Dorsolateral prefrontal cortex (tissue), 120 donors: ENCODE measurements at regions of chr9 and their contacts with region 1.

Region 1: DNA sequence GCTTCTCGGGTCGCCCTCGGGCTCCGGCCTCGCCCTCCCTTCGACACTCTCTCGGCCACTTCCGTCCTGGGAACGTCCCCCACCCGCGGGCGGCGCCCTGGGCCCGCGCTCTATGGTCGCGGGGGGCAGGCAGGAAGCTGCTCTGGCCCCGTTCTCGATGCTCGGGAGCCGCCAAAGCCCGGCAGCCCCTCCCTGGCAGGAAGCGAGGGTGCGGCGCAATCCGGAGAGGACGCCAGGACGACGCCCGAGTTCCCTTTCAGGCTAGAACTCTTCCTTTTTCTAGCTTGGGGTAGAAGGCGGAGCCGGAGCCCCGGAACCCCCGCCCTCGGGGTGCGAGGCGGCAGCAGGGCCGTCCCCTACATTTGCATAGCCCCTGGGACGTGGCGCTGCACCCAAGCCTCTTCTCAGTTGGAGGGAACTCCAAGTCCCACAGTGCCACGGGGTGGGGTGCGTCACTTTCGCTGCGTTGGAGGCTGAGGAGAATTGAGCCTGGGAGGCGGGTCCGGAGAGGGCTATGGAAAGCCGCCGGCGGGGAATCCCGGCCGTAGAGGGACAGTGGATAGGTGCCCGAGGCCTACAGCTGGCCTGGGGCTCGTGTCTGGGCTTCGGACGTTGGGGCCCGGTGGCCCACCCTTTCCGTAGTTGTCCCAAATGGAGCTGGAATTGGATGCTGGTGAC is at the starts of genes CREB3 and TLN1:
- DNase-seq: peak; percentile 94 to 99 (median 97)
- H3K4me3 ChIP-seq: peak within 1 kb of the TSS; percentile 60 to 100 (median 88)
- H3K27ac ChIP-seq: peak within 1 kb of the TSS; percentile 33 to 98 (median 92)
- H3K27me3 ChIP-seq: no peaks in the 10 kb centered on the region
- CTCF ChIP-seq: peak in 50 of 56 donors; percentile 0 to 72 (median 45)
- total RNA-seq, gene CREB3: 30.1 to 53.9 (median 40.9) TPM
- total RNA-seq, gene TLN1: 65.1 to 206 (median 112) TPM

Region 2: GRCh38 chr9:35111001-35111933 is 621.0 kb before region 1 on chr9:
- intact Hi-C with region 1: loop called in 1 of 2 experiments (anchors 5 kb)
- DNase-seq: peak; percentile 97 to 99 (median 99)
- H3K4me3 ChIP-seq: peak overlapping the region; percentile 60 to 99 (median 94)
- H3K27ac ChIP-seq: peak overlapping the region; percentile 72 to 98 (median 92)
- H3K27me3 ChIP-seq: no peaks in the 10 kb centered on the region
- CTCF ChIP-seq: peak in 22 of 56 donors; percentile 11 to 51 (median 26)

Region 3: GRCh38 chr9:35489313-35490154 is 242.7 kb before region 1 on chr9 and contains the start of gene RUSC2:
- intact Hi-C with region 1: loop called (anchors 10 kb)
- DNase-seq: peak; percentile 63 to 88 (median 80)
- H3K4me3 ChIP-seq: peak within 1 kb of the TSS; percentile 71 to 96 (median 89)
- H3K27ac ChIP-seq: peak within 1 kb of the TSS; percentile 65 to 99 (median 95)
- H3K27me3 ChIP-seq: no peaks in the 10 kb centered on the region
- CTCF ChIP-seq: peak; percentile 12 to 78 (median 57)
- total RNA-seq, gene RUSC2: 95.5 to 189 (median 149) TPM

Region 4: DNA sequence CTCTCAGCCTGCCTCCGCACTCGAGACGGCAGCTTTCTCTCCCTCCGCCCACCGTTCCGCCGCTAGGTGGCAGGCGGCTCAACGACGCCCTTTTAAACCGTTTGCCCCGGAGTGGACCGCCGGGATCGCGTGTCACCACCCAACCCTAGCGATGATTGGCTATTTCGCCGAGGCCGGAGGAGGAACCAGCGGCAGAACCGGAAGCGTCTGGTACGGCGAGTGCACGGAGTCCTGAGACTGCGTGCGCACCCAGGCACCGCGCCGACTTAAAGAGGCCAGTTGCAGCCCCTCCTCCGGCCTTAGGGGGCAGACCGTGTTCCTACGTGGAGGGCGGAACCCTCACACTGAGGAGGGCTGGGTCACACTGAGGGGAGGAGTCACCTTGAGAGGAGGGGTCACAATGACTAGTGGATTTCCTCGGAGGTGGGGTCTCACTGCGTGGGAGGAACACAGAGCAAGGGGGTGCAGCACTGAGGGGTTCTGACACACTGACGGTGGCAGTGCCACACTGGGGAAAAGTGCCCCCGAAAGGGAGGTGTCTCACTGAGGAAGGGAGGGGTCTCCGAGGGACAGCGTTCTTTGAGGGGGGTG is 128.2 kb before region 1 on chr9:
- intact Hi-C with region 1: loop called (anchors 1 kb)
- DNase-seq: peak; percentile 98 to 99 (median 99)
- H3K4me3 ChIP-seq: peak overlapping the region; percentile 49 to 97 (median 79)
- H3K27ac ChIP-seq: peak overlapping the region; percentile 63 to 95 (median 88)
- H3K27me3 ChIP-seq: no peaks in the 10 kb centered on the region
- CTCF ChIP-seq: peak; percentile 93 to 100 (median 98)

Region 5: GRCh38 chr9:35646533-35647265 is 85.6 kb before region 1 on chr9:
- intact Hi-C with region 1: loop called (anchors 2 kb)
- DNase-seq: peak; percentile 84 to 94 (median 90)
- H3K4me3 ChIP-seq: peak overlapping the region; percentile 47 to 90 (median 73)
- H3K27ac ChIP-seq: peak overlapping the region; percentile 54 to 96 (median 86)
- H3K27me3 ChIP-seq: no peaks in the 10 kb centered on the region
- CTCF ChIP-seq: peak; percentile 79 to 99 (median 97)

Region 6: GRCh38 chr9:35657546-35658136 is 74.6 kb before region 1 on chr9 and contains the start of gene RMRP:
- intact Hi-C with region 1: loop called (anchors 1 kb)
- DNase-seq: peak; percentile 93 to 99 (median 98)
- H3K4me3 ChIP-seq: peak within 1 kb of the TSS; percentile 61 to 99 (median 93)
- H3K27ac ChIP-seq: peak within 1 kb of the TSS; percentile 80 to 100 (median 98)
- H3K27me3 ChIP-seq: no peaks in the 10 kb centered on the region
- CTCF ChIP-seq: peak in 50 of 56 donors; percentile 17 to 65 (median 45)
- total RNA-seq, gene RMRP: 532 to 8,708 (median 3,979) TPM

Region 7: DNA sequence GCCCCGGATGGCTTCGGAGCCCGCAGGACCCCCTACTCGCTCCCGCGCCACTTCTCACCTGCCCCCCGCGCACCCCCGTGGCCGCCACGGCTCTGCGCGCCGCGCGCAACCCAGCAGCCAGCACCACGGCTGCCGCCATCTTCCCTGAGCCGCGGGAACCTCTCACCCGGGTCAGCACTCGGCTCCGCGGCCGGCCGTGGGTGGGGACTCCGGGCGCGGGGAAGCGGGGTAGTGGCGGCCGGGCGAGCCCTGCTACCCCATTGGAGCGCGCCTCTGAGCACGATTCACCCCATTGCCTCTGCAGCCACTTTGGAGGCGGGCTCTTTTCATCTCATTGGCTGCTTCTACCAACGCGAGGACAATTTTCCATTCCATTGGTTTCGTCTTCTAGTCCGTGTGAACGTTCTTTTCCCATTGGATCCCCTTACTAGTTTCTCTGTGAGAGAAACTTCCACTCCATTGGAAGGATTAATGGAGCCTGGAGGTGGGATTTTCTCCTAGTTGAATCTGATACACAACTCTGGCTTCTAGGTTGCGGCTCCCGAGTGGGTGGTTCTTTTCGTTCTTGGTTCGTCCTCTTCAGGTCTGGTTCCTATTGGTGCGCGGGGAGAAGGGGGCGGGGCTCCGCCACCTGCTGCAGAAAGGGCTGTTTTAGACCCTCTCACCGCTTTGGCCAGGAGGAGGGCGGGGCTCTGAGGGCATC is 82.7 kb after region 1 on chr9 and contains the start of gene HINT2:
- intact Hi-C with region 1: loop called in 1 of 2 experiments (anchors 2 kb)
- DNase-seq: peak; percentile 87 to 98 (median 96)
- H3K4me3 ChIP-seq: peak within 1 kb of the TSS; percentile 58 to 100 (median 93)
- H3K27ac ChIP-seq: peak within 1 kb of the TSS; percentile 83 to 100 (median 98)
- H3K27me3 ChIP-seq: no peaks in the 10 kb centered on the region
- CTCF ChIP-seq: peak in 12 of 56 donors; percentile 2 to 31 (median 12)
- total RNA-seq, gene HINT2: 16.1 to 49.1 (median 32.2) TPM